B cell (primary cell): ENCODE measurements at regions of chr1 and their contacts with region 1.

Region 1: GRCh38 chr1:167362638-167363037 is 142.0 kb downstream of the POU2F1 start:
- DNase-seq: no peak
- ATAC-seq: no peak
- H3K4me3 ChIP-seq: no peak overlapping the region
- H3K4me3 Mint-ChIP-seq: no peak overlapping the region
- H3K27ac ChIP-seq: no peak overlapping the region
- H3K27ac Mint-ChIP-seq: no peak overlapping the region
- H3K4me1 ChIP-seq: peaks cover 2 to 3% of the 10 kb centered on the region in 2 donors
- H3K4me1 Mint-ChIP-seq: peaks cover 32% of the 10 kb centered on the region
- H3K27me3 ChIP-seq: no peaks in the 10 kb centered on the region
- H3K27me3 Mint-ChIP-seq: no peaks in the 10 kb centered on the region
- CTCF ChIP-seq: no peak

Region 2: GRCh38 chr1:167375939-167376338 is 13.3 kb after region 1 on chr1:
- CTCF ChIA-PET with region 1: interaction called, 3 read pairs
- POLR2A ChIA-PET with region 1: no interaction called
- intact Hi-C with region 1: loop called (anchors 2 kb)
- DNase-seq: no peak
- ATAC-seq: no peak
- H3K4me3 ChIP-seq: no peak overlapping the region
- H3K4me3 Mint-ChIP-seq: no peak overlapping the region
- H3K27ac ChIP-seq: no peak overlapping the region
- H3K27ac Mint-ChIP-seq: no peak overlapping the region
- H3K4me1 ChIP-seq: no peaks in the 10 kb centered on the region
- H3K4me1 Mint-ChIP-seq: no peaks in the 10 kb centered on the region
- H3K27me3 ChIP-seq: no peaks in the 10 kb centered on the region
- H3K27me3 Mint-ChIP-seq: no peaks in the 10 kb centered on the region
- CTCF ChIP-seq: no peak

Region 3: GRCh38 chr1:167467126-167467710 is 104.6 kb after region 1 on chr1:
- CTCF ChIA-PET with region 1: no interaction called
- POLR2A ChIA-PET with region 1: no interaction called
- intact Hi-C with region 1: no loop called
- DNase-seq: no peak
- ATAC-seq: no peak
- H3K4me3 ChIP-seq: no peak overlapping the region
- H3K4me3 Mint-ChIP-seq: no peak overlapping the region
- H3K27ac ChIP-seq: no peak overlapping the region
- H3K27ac Mint-ChIP-seq: no peak overlapping the region
- H3K4me1 ChIP-seq: no peaks in the 10 kb centered on the region
- H3K4me1 Mint-ChIP-seq: no peaks in the 10 kb centered on the region
- H3K27me3 ChIP-seq: no peaks in the 10 kb centered on the region
- H3K27me3 Mint-ChIP-seq: peaks cover 3% of the 10 kb centered on the region
- CTCF ChIP-seq: no peak

Region 4: DNA sequence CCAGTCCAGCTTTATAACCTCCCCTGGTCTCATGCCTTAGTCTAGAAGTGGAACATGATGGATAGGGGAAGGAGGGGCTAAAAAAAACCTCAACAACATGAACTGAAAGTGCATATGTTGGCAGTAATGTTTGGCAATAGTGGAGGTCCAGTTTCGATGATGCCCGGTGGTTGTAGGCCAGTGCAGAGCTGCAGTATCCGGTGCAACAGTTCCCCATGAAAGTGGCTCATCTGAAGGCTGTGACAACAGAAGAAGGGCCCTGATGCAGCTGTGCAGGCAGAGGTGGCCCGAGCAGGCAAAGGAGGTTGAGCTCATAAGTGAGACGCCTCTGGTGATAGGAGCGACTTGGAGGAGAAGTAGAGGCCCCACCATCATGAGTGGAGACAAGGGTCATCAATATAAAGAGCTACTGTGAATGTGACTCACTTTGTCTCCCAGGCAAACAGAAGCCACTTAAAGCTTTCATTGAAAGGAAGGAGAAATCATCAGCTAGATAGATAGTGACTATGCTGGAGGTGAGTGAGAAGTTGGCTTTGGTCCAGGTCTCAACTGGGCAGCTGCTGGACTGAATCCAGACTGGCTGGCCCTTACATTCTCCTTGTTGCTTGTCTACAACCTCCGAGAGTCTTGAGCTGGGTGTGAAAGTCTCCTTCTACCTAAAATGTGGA is 201.1 kb after region 1 on chr1:
- CTCF ChIA-PET with region 1: no interaction called
- POLR2A ChIA-PET with region 1: no interaction called
- intact Hi-C with region 1: no loop called
- DNase-seq: no peak
- ATAC-seq: no peak
- H3K4me3 ChIP-seq: no peak overlapping the region
- H3K4me3 Mint-ChIP-seq: no peak overlapping the region
- H3K27ac ChIP-seq: no peak overlapping the region
- H3K27ac Mint-ChIP-seq: no peak overlapping the region
- H3K4me1 ChIP-seq: peaks cover 9 to 10% of the 10 kb centered on the region in 2 donors
- H3K4me1 Mint-ChIP-seq: peaks cover 12% of the 10 kb centered on the region
- H3K27me3 ChIP-seq: peaks cover 0 to 8% (median 0%) of the 10 kb centered on the region in 4 experiments
- H3K27me3 Mint-ChIP-seq: peaks cover 7% of the 10 kb centered on the region
- CTCF ChIP-seq: no peak